A549 (cell line): ENCODE measurements at regions of chr15 and their contacts with region 1.

Region 1: GRCh38 chr15:55846116-55846707 is 103.3 kb upstream of the PRTG start:
- DNase-seq: peak; percentile 71 to 85
- ATAC-seq: peak; percentile 74 to 87; a peak in 5 of 6 replicates
- H3K4me3 ChIP-seq: no peak overlapping the region
- H3K27ac ChIP-seq: no peak overlapping the region
- H3K4me1 ChIP-seq: no peaks in the 10 kb centered on the region
- CTCF ChIP-seq: peak; percentile 87
- EP300 ChIP-seq: no peak
- POLR2A ChIP-seq: no peak
- RAD21 ChIP-seq: peak; percentile 79 to 81

Region 2: GRCh38 chr15:55827204-55827603 is 19.0 kb before region 1 on chr15:
- CTCF ChIA-PET with region 1: interaction called, 11 read pairs
- POLR2A ChIA-PET with region 1: no interaction called
- DNase-seq: no peak
- ATAC-seq: peak in 1 of 2 experiments; percentile 25; a peak in 1 of 6 replicates
- H3K4me3 ChIP-seq: no peak overlapping the region
- H3K27ac ChIP-seq: no peak overlapping the region
- H3K4me1 ChIP-seq: peaks cover 6% of the 10 kb centered on the region; the same call in 1 of the 3 replicates
- CTCF ChIP-seq: no peak
- EP300 ChIP-seq: no peak
- POLR2A ChIP-seq: no peak
- RAD21 ChIP-seq: no peak

Region 3: DNA sequence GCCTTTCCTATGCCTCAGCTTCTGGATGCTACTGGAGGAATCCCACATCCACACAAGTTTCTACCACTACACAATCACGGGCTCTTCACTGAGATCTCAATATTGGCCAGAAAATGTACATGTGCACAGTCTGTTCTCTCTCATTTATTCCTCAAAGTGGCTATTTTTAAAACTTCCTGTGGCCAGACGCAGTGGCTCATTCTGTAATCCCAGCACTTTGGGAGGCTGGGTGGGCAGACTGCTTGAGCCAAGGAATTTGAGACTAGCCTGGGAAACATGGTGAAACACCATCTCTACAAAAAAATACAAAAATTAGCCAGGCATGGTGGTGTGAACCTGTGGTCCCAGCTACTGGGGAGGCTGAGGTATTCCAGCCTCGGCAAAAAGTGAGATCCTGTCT is 11.9 kb before region 1 on chr15:
- CTCF ChIA-PET with region 1: interaction called, 14 read pairs
- POLR2A ChIA-PET with region 1: no interaction called
- DNase-seq: no peak
- ATAC-seq: no peak
- H3K4me3 ChIP-seq: no peak overlapping the region
- H3K27ac ChIP-seq: no peak overlapping the region
- H3K4me1 ChIP-seq: no peaks in the 10 kb centered on the region
- CTCF ChIP-seq: no peak
- EP300 ChIP-seq: no peak
- POLR2A ChIP-seq: no peak
- RAD21 ChIP-seq: no peak

Region 4: DNA sequence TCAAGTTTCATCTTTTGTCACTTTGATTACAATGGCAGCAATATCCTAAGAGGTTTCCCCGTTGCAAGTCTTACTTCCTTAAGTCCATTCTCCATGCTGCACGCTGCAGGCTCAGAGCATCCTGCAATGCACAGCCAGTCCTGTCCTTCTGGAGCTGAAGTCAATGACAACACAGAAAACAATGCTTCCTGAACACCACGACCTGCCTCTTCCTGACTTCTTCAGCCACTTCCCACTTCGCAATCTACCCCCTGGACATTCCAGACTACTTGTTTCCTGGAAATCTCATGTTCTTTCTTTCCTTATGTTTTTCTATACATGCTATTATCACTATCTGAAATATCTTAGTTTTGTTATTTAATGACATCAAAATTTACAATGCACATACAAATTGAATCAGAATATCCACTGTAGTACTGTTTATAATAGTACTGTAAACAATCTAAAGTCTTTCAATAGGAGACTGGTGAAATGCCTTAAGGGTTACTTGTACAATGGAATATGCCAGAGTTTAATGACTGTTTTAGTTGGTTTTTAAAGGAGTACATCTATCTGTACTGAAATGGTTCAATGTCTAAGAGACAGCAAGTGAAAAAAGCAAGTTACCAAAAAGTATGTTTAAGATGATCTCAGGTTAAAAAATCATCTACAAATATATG is 10.4 kb after region 1 on chr15:
- CTCF ChIA-PET with region 1: interaction called, 22 read pairs
- POLR2A ChIA-PET with region 1: interaction called, 3 read pairs
- DNase-seq: no peak
- ATAC-seq: peak in 1 of 2 experiments; percentile 36; a peak in 1 of 6 replicates
- H3K4me3 ChIP-seq: no peak overlapping the region
- H3K27ac ChIP-seq: no peak overlapping the region
- H3K4me1 ChIP-seq: peaks cover 6% of the 10 kb centered on the region; the same call in 1 of the 3 replicates
- CTCF ChIP-seq: no peak
- EP300 ChIP-seq: no peak
- POLR2A ChIP-seq: no peak
- RAD21 ChIP-seq: no peak

Region 5: GRCh38 chr15:56040081-56041035 is 194.1 kb after region 1 on chr15:
- CTCF ChIA-PET with region 1: no interaction called
- POLR2A ChIA-PET with region 1: no interaction called
- DNase-seq: peak; percentile 66 to 90
- ATAC-seq: peak; percentile 85 to 89
- H3K4me3 ChIP-seq: no peak overlapping the region
- H3K27ac ChIP-seq: peak overlapping the region; percentile 80 to 87
- H3K4me1 ChIP-seq: peaks cover 44% of the 10 kb centered on the region
- CTCF ChIP-seq: no peak
- EP300 ChIP-seq: peak in 1 of 2 experiments; percentile 66; a peak in 1 of 5 replicates
- POLR2A ChIP-seq: no peak
- RAD21 ChIP-seq: peak in 1 of 2 experiments; percentile 22; a peak in 1 of 5 replicates